Naive thymus-derived CD4-positive, alpha-beta T cell (primary cell): ENCODE measurements at regions of chr11 and their contacts with region 1.

Region 1: GRCh38 chr11:36306888-36307287 is 10.8 kb downstream of the PRR5L start:
- DNase-seq: no peak
- ATAC-seq: peak; percentile 26
- H3K4me3 ChIP-seq: no peak overlapping the region
- H3K4me3 Mint-ChIP-seq: no peak overlapping the region
- H3K27ac ChIP-seq: no peak overlapping the region
- H3K27ac Mint-ChIP-seq: no peak overlapping the region
- H3K4me1 ChIP-seq: peaks cover 0 to 5% of the 10 kb centered on the region in 2 donors
- H3K4me1 Mint-ChIP-seq: peaks cover 0 to 8% (median 0%) of the 10 kb centered on the region in 7 donors
- H3K27me3 ChIP-seq: no peaks in the 10 kb centered on the region
- H3K27me3 Mint-ChIP-seq: peaks cover 13 to 38% (median 20%) of the 10 kb centered on the region in 5 donors

Region 2: DNA sequence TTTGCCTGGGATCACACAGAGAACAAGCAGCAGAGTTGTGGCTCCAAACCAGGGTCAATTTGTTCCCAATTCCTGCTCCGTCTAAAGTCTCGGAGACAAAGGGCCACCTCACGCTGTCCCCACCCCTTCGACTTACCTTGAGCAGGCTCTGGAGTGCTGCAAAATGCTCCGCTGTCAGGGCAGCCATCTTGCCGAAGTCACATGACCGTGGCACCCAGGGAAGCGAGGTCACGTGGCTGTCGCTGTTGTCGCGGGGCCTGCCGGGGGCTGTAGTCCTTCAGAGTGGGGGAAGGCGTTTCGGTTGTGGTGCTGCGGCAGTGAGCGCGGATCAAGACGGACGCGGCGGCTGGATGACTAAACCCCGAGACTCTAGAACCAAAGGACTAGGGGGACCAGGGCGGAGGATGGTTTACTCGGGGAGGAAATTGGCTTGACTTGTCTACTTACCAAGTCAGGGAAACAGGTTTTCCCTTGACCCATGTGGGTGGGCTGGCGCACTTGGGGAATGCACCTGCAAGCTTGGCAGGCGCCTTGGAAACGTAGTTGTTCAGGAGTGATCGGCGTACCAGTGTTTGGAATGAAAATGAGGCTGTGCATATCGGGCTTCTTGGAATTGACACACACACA is 17.5 kb before region 1 on chr11 and contains the start of gene COMMD9:
- CTCF ChIA-PET with region 1: no interaction called
- POLR2A ChIA-PET with region 1: no interaction called
- intact Hi-C with region 1: no loop called
- DNase-seq: peak; percentile 78 to 93 (median 91)
- ATAC-seq: peak; percentile 98
- H3K4me3 ChIP-seq: peak within 1 kb of the TSS; percentile 98
- H3K4me3 Mint-ChIP-seq: peak within 1 kb of the TSS; percentile 87 to 99 (median 94)
- H3K27ac ChIP-seq: peak within 1 kb of the TSS; percentile 58
- H3K27ac Mint-ChIP-seq: peak within 1 kb of the TSS; percentile 85 to 98 (median 90)
- H3K4me1 ChIP-seq: peaks cover 6 to 14% of the 10 kb centered on the region in 2 donors
- H3K4me1 Mint-ChIP-seq: peaks cover 24 to 55% (median 42%) of the 10 kb centered on the region in 7 donors
- H3K27me3 ChIP-seq: no peaks in the 10 kb centered on the region
- H3K27me3 Mint-ChIP-seq: no peaks in the 10 kb centered on the region
- total RNA-seq, gene COMMD9: 42.6 to 62.2 (median 45.9) TPM

Region 3: GRCh38 chr11:36361901-36362391 is 55.1 kb after region 1 on chr11:
- CTCF ChIA-PET with region 1: no interaction called
- POLR2A ChIA-PET with region 1: no interaction called
- intact Hi-C with region 1: no loop called
- DNase-seq: no peak
- ATAC-seq: peak; percentile 53
- H3K4me3 ChIP-seq: no peak overlapping the region
- H3K4me3 Mint-ChIP-seq: peak overlapping the region in 5 of 10 donors; percentile 22 to 55 (median 36)
- H3K27ac ChIP-seq: no peak overlapping the region
- H3K27ac Mint-ChIP-seq: peak overlapping the region in 1 of 9 donors; percentile 22
- H3K4me1 ChIP-seq: peaks cover 0 to 34% of the 10 kb centered on the region in 2 donors
- H3K4me1 Mint-ChIP-seq: peaks cover 0 to 51% (median 13%) of the 10 kb centered on the region in 7 donors
- H3K27me3 ChIP-seq: no peaks in the 10 kb centered on the region
- H3K27me3 Mint-ChIP-seq: peaks cover 3 to 45% (median 35%) of the 10 kb centered on the region in 5 donors

Region 4: GRCh38 chr11:36478700-36479329 is 171.9 kb after region 1 on chr11:
- CTCF ChIA-PET with region 1: no interaction called
- POLR2A ChIA-PET with region 1: no interaction called
- intact Hi-C with region 1: loop called in 1 of 2 experiments (anchors 1 kb)
- DNase-seq: peak in 3 of 9 donors; percentile 6 to 27 (median 12)
- ATAC-seq: peak; percentile 47
- H3K4me3 ChIP-seq: no peak overlapping the region
- H3K4me3 Mint-ChIP-seq: no peak overlapping the region
- H3K27ac ChIP-seq: no peak overlapping the region
- H3K27ac Mint-ChIP-seq: no peak overlapping the region
- H3K4me1 ChIP-seq: no peaks in the 10 kb centered on the region
- H3K4me1 Mint-ChIP-seq: peaks cover 0 to 6% (median 0%) of the 10 kb centered on the region in 7 donors
- H3K27me3 ChIP-seq: no peaks in the 10 kb centered on the region
- H3K27me3 Mint-ChIP-seq: no peaks in the 10 kb centered on the region

Region 5: DNA sequence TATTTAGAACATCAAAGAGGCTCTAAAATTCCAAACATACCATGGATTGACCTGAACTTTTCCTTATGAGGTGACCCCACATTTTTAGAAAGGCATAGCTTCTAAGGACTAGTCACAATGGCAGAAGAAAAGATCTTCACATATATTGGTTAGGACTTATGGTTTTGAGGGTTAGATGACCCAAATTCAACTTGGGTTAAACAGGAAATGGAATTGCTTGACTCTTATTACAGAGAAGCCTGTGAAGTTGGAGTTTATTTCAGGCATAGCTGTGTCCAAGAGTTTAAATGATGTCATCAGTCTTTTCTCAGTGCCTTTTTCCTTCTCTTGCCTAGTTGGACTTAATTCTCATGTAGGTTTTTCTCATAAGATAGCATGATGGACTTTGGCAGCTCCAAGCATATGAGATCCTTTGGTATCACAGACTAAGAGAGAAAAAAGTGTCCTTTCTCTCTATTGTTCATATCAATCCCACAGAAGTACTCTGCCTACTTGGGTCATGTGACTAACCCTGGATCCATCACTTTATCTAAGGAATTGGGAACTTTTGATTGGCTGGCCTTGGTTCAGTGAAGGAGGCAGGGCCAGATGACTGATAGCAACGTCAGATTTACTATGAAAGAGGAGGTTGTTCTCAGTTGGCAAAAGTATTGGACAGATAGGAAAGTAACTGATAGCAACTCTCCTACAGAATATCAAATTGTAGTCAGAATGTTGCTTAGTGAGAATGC is 243.7 kb after region 1 on chr11:
- CTCF ChIA-PET with region 1: no interaction called
- POLR2A ChIA-PET with region 1: no interaction called
- intact Hi-C with region 1: no loop called
- DNase-seq: no peak
- ATAC-seq: no peak
- H3K4me3 ChIP-seq: no peak overlapping the region
- H3K4me3 Mint-ChIP-seq: no peak overlapping the region
- H3K27ac ChIP-seq: no peak overlapping the region
- H3K27ac Mint-ChIP-seq: no peak overlapping the region
- H3K4me1 ChIP-seq: peaks cover 0 to 5% of the 10 kb centered on the region in 2 donors
- H3K4me1 Mint-ChIP-seq: peaks cover 0 to 6% (median 0%) of the 10 kb centered on the region in 7 donors
- H3K27me3 ChIP-seq: no peaks in the 10 kb centered on the region
- H3K27me3 Mint-ChIP-seq: peaks cover 0 to 46% (median 7%) of the 10 kb centered on the region in 5 donors